ENCODE measurements at regions of chr2 and their contacts with region 1.

Region 1: DNA sequence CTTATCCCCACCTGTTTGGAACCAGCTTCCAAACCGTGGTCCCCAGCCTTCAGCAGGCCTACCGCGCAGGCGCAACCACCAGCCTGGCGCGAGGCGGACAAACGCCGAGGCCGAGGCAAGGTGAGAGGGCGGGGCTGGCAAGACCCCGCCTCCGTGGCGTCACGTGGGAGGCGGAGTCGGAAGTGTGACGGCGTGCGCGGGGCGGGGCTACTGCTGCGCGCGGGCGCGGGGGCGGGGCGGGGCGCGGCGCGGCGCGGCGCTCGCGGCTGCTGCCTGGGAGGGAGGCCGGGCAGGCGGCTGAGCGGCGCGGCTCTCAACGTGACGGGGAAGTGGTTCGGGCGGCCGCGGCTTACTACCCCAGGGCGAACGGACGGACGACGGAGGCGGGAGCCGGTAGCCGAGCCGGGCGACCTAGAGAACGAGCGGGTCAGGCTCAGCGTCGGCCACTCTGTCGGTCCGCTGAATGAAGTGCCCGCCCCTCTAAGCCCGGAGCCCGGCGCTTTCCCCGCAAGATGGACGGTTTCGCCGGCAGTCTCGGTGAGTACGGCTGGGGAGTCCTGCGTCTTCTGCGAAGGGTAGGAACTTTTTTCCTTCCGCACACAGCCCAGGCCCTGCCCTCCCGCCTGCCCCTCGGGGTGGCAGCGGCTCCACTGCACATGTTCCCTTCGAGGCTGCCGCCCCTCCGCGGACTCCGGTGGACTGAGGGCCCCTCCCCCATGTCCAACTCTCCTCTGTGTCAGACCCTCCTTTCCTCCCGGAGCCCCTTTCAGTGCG is at the start of gene EML4:
- DNase-seq: peak; percentile 89 to 92
- H3K4me3 ChIP-seq: peak within 1 kb of the TSS; percentile 64 to 93 (median 79)
- H3K27ac ChIP-seq: peak within 1 kb of the TSS; percentile 50 to 83 (median 83)
- H3K4me1 ChIP-seq: peaks cover 31 to 35% of the 10 kb centered on the region in 2 donors
- H3K27me3 ChIP-seq: no peaks in the 10 kb centered on the region
- CTCF ChIP-seq: no peak
- POLR2A ChIP-seq: peak in 1 of 2 donors; percentile 88
- total RNA-seq, gene EML4: 52.5 to 67.2 (median 64.7) TPM

Region 2: GRCh38 chr2:42102024-42102590 is 67.2 kb before region 1 on chr2:
- intact Hi-C with region 1: loop called (anchors 10 kb)
- DNase-seq: peak; percentile 65 to 66
- H3K4me3 ChIP-seq: peak overlapping the region in 1 of 3 donors; percentile 17
- H3K27ac ChIP-seq: peak overlapping the region; percentile 84 to 92 (median 90)
- H3K4me1 ChIP-seq: peaks cover 13 to 39% of the 10 kb centered on the region in 2 donors
- H3K27me3 ChIP-seq: no peaks in the 10 kb centered on the region
- CTCF ChIP-seq: no peak
- POLR2A ChIP-seq: no peak

Measured in thyroid gland (tissue), 4 donors.